ENCODE measurements at regions of chr12 and their contacts with region 1.

Region 1: DNA sequence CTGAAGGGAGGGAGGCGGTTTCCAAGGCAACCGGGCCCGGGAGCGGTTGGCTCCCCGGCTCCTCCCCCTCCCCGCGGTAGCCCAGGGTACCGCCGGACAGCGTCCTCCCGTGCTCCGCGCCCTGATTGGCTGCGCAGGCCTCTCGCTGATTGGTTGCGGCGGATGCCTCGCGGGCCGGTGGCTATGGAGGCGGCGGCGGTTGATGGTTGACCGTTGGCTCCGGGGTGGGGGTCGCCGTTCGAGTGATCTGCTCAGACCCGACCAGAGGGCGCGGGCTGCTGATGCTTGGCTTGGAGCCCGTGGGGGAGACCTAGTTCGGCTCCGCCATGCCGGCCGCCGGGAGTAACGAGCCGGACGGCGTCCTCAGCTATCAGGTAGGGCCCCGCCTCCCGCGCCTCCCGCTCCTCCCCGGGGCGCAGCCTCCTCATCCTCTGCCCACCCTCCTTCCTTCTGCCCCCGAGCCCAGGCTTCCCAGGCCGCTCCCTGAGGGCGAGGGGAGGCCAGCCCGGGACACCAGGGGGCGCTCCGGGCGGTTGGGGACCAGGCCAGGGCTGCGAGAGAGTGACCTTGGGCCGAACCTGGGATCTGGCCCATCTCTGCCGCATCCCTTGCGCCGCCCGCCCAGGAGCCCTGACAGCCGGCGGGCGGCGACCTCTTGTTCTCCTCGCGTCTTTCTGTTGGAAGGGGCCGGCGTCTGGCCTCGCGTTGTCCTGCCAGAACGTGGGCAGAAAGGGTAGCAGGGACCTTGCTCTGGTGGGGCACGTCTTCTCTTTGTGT is at the start of gene SLC4A8:
- DNase-seq: peak; percentile 92 to 100 (median 98)

Region 2: GRCh38 chr12:51351913-51352532 is 72.8 kb before region 1 on chr12:
- intact Hi-C with region 1: no loop called
- DNase-seq: peak; percentile 22 to 85 (median 68)

Region 3: DNA sequence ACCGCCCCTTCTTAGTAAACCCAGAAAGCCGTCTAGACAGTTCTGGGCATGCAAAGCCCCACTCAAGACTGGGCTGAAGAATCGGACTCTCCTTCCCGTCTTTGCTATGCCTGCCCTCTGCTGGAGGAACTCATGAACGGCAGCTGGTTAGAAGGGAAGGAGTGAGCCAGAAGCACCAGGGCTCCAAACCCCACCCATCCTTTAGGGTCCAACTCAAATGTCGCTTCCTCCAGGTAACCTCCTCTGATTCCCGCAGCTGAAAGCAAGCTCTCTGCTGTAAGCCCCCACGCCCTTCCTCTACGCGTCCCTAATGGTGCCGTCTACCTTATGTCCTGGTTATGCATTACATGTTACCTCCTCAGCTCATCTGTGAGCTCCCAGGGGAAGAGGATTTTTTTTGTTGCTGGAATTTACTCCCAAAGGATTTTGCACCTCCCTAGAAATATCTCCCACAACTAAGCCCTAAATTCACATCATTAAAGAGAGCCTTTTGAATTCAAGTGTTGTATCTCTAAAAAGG is 107.2 kb after region 1 on chr12:
- intact Hi-C with region 1: loop called (anchors 5 kb)
- DNase-seq: peak; percentile 39 to 93 (median 81)

Region 4: DNA sequence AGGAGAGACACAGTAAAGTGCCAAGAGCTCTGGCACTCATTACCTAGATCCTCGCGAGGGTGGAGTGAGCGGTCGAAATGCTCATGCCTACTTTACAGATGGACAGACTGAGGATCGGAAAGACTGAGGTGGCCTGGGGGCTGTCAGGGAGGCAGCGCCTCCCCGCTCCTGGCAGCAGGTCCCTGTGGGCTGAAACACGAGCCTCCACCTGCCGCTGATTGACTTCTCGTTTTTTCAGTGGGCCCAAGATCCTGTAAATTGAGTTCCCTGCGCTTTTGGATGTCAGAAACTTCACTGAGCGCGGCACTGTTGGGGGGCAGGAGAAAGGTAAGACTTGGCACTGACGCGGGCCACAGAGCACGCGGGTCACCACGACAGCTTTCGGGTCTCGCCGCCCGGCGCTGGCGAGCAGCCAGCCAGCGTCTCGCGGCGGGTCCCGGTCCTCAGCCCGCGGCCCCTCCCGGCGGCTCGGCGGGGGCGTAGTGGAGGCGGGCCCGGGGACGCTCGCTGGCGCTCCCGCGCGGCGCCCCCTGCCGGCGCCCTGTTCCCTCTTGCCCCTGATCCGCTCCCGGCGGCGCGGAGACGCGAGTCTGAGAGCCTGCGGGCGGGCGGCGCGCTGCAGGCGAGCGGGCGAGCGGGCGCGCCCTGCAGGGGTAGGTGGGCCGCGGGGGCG is 165.6 kb after region 1 on chr12:
- intact Hi-C with region 1: no loop called
- DNase-seq: peak; percentile 23 to 89 (median 80)

Region 5: GRCh38 chr12:51809193-51809592 is 384.3 kb after region 1 on chr12:
- intact Hi-C with region 1: no loop called
- DNase-seq: no peak

Region 6: GRCh38 chr12:51823875-51824565 is 399.2 kb after region 1 on chr12:
- intact Hi-C with region 1: loop called (anchors 2 kb)
- DNase-seq: peak in 37 of 42 donors; percentile 36 to 87 (median 62)